Pancreas (tissue), 10 donors: ENCODE measurements at regions of chr15 and their contacts with region 1.

Region 1: DNA sequence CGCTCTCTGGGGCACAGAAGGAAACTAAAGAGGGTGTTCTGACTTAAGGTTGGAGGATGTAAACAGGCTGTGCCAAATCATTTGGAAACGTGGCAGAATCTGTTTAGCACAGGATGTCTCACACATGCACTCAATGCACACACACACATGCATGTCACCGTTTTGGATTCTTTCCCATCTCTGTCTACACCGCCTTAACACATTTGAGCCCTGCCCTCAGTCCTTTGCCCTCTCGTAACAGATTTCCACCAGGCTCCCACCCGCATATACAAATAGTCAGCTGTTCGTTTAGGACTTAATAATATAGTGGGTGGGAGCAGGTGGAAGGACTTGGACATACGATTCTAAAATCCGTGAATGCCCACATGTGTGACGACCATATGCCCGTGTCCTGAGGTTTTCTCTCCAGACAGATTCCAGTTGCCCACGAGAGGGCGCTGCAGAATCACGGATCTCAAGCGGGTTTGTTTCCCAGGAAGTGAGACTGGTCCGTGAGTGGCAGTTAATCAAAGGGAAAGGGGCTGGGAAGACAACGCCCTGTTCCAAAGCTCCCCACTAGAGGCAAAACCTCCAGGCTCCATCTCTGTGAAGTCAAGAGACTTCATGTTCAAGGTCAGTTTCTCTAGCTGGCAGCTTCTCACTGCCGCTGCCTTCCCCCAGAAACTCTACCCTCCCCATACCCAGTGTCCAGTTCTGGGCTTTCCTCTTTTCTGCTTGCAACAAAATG is 44.5 kb downstream of the NOX5 start:
- DNase-seq: peak; percentile 72 to 97 (median 86)
- ATAC-seq: peak; percentile 91 to 97 (median 92)
- H3K4me3 ChIP-seq: no peak overlapping the region
- H3K27ac ChIP-seq: no peak overlapping the region
- H3K4me1 ChIP-seq: no peaks in the 10 kb centered on the region
- H3K27me3 ChIP-seq: no peaks in the 10 kb centered on the region
- CTCF ChIP-seq: peak; percentile 62 to 83 (median 71)

Region 2: DNA sequence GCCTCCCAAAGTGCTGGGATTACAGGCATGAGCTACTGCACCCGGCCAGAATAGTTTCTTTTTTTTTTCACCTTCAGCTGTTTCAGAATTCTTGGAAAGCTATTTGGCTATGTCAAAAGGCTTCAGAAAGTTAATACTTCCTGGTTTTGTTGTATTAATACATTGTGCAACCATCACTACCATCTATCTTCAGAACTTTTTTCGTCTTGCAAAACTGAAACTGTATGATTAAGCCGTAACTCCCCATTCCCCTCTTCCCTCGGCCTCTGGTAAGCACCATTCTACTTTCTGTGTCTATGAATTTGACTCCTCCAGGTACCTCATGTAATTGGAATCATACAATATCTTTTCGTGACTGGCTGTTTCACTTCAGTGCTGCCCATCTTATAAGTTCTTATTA is 49.7 kb before region 1 on chr15:
- intact Hi-C with region 1: no loop called
- DNase-seq: no peak
- ATAC-seq: no peak
- H3K4me3 ChIP-seq: no peak overlapping the region
- H3K27ac ChIP-seq: no peak overlapping the region
- H3K4me1 ChIP-seq: no peaks in the 10 kb centered on the region
- H3K27me3 ChIP-seq: no peaks in the 10 kb centered on the region
- CTCF ChIP-seq: no peak

Region 3: DNA sequence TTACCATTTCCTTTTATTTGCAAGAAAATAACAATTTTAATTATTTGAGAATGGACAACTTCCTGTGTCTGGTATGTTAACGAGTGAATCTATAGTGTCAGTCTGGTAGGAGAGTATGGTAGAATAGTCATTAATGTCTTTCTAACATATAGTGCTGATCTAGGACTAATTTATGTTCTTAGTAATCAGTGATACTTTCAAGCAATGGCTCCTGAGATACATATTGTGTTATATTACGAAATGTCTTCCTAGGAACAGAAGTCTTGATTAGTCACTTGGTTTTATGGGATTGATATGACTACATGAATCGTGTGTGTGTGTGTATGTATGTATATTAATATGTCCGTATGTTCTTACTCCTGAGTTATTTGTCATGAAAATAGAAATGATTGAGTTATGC is 173.2 kb after region 1 on chr15:
- intact Hi-C with region 1: loop called in 1 of 3 experiments (anchors 10 kb)
- DNase-seq: no peak
- ATAC-seq: no peak
- H3K4me3 ChIP-seq: no peak overlapping the region
- H3K27ac ChIP-seq: no peak overlapping the region
- H3K4me1 ChIP-seq: no peaks in the 10 kb centered on the region
- H3K27me3 ChIP-seq: no peaks in the 10 kb centered on the region
- CTCF ChIP-seq: no peak

Region 4: DNA sequence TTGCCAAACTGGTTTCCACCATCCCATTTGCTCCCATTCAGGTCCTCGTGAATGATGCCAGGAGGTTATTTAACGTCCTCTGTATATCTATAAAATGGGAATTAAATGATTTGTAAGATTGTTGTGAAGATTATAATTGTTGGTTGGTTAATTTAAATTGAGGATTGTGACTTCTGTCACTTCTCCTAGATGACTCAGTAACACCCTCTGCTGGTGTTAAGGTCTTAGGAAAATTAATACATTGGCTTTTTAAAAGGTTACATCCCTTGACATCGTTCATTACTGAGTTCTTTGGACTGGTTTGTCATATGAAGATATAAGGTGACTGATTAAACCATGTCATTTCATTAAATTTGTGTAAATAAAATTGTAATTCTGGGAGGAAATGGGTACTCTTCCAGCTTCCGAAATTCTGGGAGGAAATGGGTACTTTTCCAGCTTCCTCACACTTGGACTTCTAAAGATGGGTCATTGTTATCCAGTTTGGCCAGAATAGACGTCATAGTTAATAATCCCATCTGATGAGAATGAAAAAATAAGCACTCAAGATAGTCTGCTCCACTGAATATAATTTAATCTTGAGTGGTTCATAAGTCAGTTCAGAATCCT is 206.5 kb after region 1 on chr15:
- intact Hi-C with region 1: loop called in 2 of 3 experiments (anchors 5 kb)
- DNase-seq: no peak
- ATAC-seq: peak in 3 of 4 donors; percentile 53 to 64 (median 55)
- H3K4me3 ChIP-seq: no peak overlapping the region
- H3K27ac ChIP-seq: no peak overlapping the region
- H3K4me1 ChIP-seq: no peaks in the 10 kb centered on the region
- H3K27me3 ChIP-seq: no peaks in the 10 kb centered on the region
- CTCF ChIP-seq: peak in 3 of 4 donors; percentile 25 to 41 (median 32)

Region 5: GRCh38 chr15:69394556-69395282 is 335.7 kb after region 1 on chr15:
- intact Hi-C with region 1: loop called in 2 of 3 experiments (anchors 5 to 10 kb)
- DNase-seq: peak; percentile 46 to 96 (median 80)
- ATAC-seq: peak; percentile 75 to 96 (median 91)
- H3K4me3 ChIP-seq: no peak overlapping the region
- H3K27ac ChIP-seq: no peak overlapping the region
- H3K4me1 ChIP-seq: no peaks in the 10 kb centered on the region
- H3K27me3 ChIP-seq: peaks cover 0 to 4% (median 0%) of the 10 kb centered on the region in 4 donors
- CTCF ChIP-seq: peak; percentile 92 to 98 (median 96)